GM12878 (cell line): ENCODE measurements at regions of chr12 and their contacts with region 1.

Region 1: GRCh38 chr12:12704593-12705230 is 8.7 kb upstream of the GPR19 start:
- DNase-seq: no peak
- ATAC-seq: peak; percentile 89
- H3K4me3 ChIP-seq: no peak overlapping the region
- H3K27ac ChIP-seq: no peak overlapping the region
- H3K4me1 ChIP-seq: peaks cover 18% of the 10 kb centered on the region
- H3K27me3 ChIP-seq: no peaks in the 10 kb centered on the region
- CTCF ChIP-seq: peak; percentile 69 to 97 (median 93); a peak in 5 of 6 replicates
- EP300 ChIP-seq: no peak
- POLR2A ChIP-seq: no peak
- RAD21 ChIP-seq: peak; percentile 99

Region 2: GRCh38 chr12:12230275-12230674 is 474.4 kb before region 1 on chr12:
- CTCF ChIA-PET with region 1: no interaction called
- POLR2A ChIA-PET with region 1: no interaction called
- RAD21 ChIA-PET with region 1: no interaction called
- SMC1A ChIA-PET with region 1: no interaction called
- in situ Hi-C with region 1: no loop called
- intact Hi-C with region 1: no loop called
- DNase-seq: no peak
- ATAC-seq: no peak
- H3K4me3 ChIP-seq: no peak overlapping the region
- H3K27ac ChIP-seq: no peak overlapping the region
- H3K4me1 ChIP-seq: no peaks in the 10 kb centered on the region
- H3K27me3 ChIP-seq: no peaks in the 10 kb centered on the region
- CTCF ChIP-seq: no peak
- EP300 ChIP-seq: no peak
- POLR2A ChIP-seq: no peak
- RAD21 ChIP-seq: no peak

Region 3: GRCh38 chr12:12376646-12377448 is 327.9 kb before region 1 on chr12:
- CTCF ChIA-PET with region 1: interaction called, 24 read pairs
- POLR2A ChIA-PET with region 1: interaction called, 3 read pairs
- RAD21 ChIA-PET with region 1: interaction called, 36 read pairs
- SMC1A ChIA-PET with region 1: interaction called, 25 read pairs
- in situ Hi-C with region 1: loop called (anchors 5 kb)
- intact Hi-C with region 1: loop called (anchors 1 kb)
- DNase-seq: peak; percentile 55
- ATAC-seq: peak; percentile 76
- H3K4me3 ChIP-seq: no peak overlapping the region
- H3K27ac ChIP-seq: no peak overlapping the region; the same call in 1 of the 2 replicates
- H3K4me1 ChIP-seq: peaks cover 6% of the 10 kb centered on the region
- H3K27me3 ChIP-seq: no peaks in the 10 kb centered on the region
- CTCF ChIP-seq: peak; percentile 41 to 81 (median 58); a peak in 5 of 6 replicates
- EP300 ChIP-seq: no peak
- POLR2A ChIP-seq: no peak
- RAD21 ChIP-seq: peak; percentile 98

Region 4: GRCh38 chr12:12654691-12655460 is 49.8 kb before region 1 on chr12:
- CTCF ChIA-PET with region 1: interaction called, 7 read pairs
- POLR2A ChIA-PET with region 1: interaction called, 4 read pairs
- RAD21 ChIA-PET with region 1: interaction called, 6 read pairs
- SMC1A ChIA-PET with region 1: interaction called, 42 read pairs
- in situ Hi-C with region 1: no loop called
- intact Hi-C with region 1: loop called (anchors 2 kb)
- DNase-seq: no peak
- ATAC-seq: 0 out of 3 replicates have a peak, but pooled peaks have one; percentile 8
- H3K4me3 ChIP-seq: no peak overlapping the region
- H3K27ac ChIP-seq: no peak overlapping the region
- H3K4me1 ChIP-seq: no peaks in the 10 kb centered on the region; the same call in 1 of the 2 replicates
- H3K27me3 ChIP-seq: no peaks in the 10 kb centered on the region
- CTCF ChIP-seq: no peak
- EP300 ChIP-seq: no peak
- POLR2A ChIP-seq: no peak
- RAD21 ChIP-seq: no peak

Region 5: GRCh38 chr12:12716793-12717585 is 12.3 kb after region 1 on chr12 and contains the start of gene CDKN1B:
- CTCF ChIA-PET with region 1: interaction called, 16 read pairs
- POLR2A ChIA-PET with region 1: interaction called, 10 read pairs
- RAD21 ChIA-PET with region 1: interaction called, 15 read pairs
- SMC1A ChIA-PET with region 1: interaction called, 51 read pairs
- in situ Hi-C with region 1: no loop called
- intact Hi-C with region 1: no loop called
- DNase-seq: peak; percentile 58
- ATAC-seq: peak; percentile 74
- H3K4me3 ChIP-seq: peak within 1 kb of the TSS; percentile 97
- H3K27ac ChIP-seq: peak within 1 kb of the TSS; percentile 97
- H3K4me1 ChIP-seq: peaks cover 20% of the 10 kb centered on the region
- H3K27me3 ChIP-seq: no peaks in the 10 kb centered on the region
- CTCF ChIP-seq: no peak
- EP300 ChIP-seq: no peak
- POLR2A ChIP-seq: peak; percentile 75
- RAD21 ChIP-seq: no peak
- polyA plus RNA-seq, gene CDKN1B: 4.2 to 8.0 TPM